Dendritic cell treated with granulocyte-macrophage colony-stimulating factor and Interleukin-4, amounts not matched to agents 40 ng/mL and 50 ng/mL, for 4 days (primary cell): ENCODE measurements at regions of chr13 and their contacts with region 1.

Region 1: GRCh38 chr13:113153810-113154748 is 4.4 kb upstream of the PROZ start:
- H3K4me3 Mint-ChIP-seq: peak overlapping the region; percentile 75
- H3K27ac Mint-ChIP-seq: peak overlapping the region; percentile 84
- H3K4me1 Mint-ChIP-seq: peaks cover 23% of the 10 kb centered on the region
- H3K27me3 Mint-ChIP-seq: peaks cover 29% of the 10 kb centered on the region

Region 2: DNA sequence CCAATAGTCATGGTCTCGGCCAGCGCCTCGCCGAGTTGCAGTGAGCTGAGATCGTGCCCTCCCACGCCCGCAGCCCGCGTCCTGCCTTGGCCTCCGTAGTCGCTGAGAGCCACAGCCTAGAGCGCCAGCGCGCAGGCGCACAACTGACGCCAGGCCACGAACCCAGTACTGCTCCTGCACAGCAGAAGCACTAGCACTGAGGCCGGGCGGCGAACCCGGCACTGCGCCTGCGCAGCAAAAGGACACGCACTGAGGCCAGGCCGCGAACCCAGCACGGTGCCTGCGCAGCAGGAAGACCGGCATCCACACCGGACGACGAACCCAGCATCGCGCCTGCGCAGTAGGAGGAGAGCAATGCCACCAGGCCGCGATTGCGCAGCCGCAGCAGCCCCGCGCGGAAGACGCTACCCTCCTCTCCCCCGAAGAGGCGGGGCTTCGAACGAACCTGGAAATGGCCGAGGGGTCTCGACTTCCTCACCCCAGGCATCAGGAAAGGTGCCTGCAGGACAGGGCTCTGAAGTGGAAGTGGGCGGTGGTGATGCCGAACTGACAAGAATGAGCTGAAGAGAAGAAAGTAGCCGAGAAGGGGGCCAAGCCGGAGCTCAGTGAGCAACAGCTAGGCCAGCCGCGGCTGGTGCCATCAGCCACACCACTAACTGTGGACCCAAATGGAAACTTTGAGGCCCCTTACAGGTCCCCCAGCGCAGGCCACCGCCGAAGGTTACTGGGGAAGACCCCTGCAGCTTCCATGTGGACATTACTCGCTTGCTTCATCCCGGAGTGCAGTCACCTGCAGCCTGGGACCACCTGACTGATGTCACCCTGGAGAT is 23.9 kb before region 1 on chr13:
- intact Hi-C with region 1: no loop called
- H3K4me3 Mint-ChIP-seq: peak overlapping the region; percentile 59
- H3K27ac Mint-ChIP-seq: no peak overlapping the region
- H3K4me1 Mint-ChIP-seq: peaks cover 5% of the 10 kb centered on the region
- H3K27me3 Mint-ChIP-seq: peaks cover 45% of the 10 kb centered on the region

Region 3: DNA sequence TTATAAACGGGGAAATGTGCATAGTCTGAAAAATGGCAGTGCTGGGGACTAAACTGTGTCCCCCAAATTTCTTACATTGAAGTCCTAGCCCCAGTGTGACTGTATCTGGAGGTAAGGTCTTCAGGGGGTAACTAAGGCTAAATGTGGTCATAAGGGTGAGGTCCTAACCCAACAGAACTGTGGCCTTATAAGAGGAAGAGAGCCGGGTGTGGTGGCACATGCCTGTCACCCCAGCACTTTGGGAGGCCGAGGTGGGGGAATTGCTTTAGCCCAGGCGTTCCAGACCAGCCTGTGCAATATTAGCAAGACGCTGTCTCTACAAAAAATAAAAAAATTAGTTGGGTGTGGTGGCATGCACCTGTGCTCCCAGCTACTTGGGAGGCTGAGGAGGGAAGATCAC is 22.2 kb after region 1 on chr13:
- intact Hi-C with region 1: loop called (anchors 1 kb)
- H3K4me3 Mint-ChIP-seq: peak overlapping the region; percentile 6
- H3K27ac Mint-ChIP-seq: peak overlapping the region; percentile 93
- H3K4me1 Mint-ChIP-seq: peaks cover 30% of the 10 kb centered on the region
- H3K27me3 Mint-ChIP-seq: no peaks in the 10 kb centered on the region

Region 4: DNA sequence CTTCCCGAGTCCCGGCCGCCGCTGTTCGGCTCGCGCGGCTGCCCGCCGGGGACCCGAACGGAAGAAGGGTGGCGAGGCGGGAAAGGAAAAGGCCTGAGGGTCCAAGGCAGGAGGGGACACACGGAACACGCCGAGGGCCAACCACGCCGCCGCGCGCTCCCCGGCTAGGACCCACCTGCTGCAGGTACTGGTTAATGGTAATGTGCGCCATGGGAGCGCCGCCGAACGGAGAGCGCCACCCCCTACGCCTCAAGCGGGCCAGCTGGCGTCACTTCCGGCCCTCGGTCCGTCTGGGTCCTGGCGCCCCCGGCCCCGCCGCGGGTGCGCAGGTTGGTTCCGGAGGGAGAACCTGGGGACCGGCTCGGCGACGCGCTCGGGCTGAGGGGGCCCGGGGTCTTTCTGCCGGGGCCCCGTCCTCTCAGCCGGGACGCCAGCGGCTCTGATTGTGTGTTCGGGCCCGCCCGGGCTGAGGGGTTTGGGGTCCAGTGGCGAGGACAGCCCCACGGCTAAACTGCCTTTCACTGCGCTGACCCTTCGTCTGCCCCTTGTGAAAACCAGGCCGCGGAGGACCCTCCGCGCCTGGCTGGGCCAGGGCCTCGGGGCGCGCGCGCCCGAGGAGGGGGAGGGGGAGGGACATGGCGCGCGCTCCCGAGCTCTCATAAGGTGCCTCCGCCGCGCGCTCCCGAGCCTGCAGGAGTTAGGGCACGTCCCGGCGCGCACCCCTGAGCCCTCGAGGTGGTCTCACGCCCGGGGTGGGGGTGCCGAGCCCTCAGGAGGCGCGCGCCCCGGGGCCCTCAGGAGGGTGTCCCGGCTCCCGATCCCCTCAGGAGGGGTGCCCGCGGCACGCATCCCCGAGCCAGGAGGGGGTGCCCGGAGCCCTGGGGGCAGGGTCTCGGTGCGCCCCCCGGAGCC is 54.6 kb after region 1 on chr13 and contains the start of gene PCID2:
- intact Hi-C with region 1: loop called (anchors 2 kb)
- H3K4me3 Mint-ChIP-seq: peak within 1 kb of the TSS; percentile 81
- H3K27ac Mint-ChIP-seq: peak within 1 kb of the TSS; percentile 82
- H3K4me1 Mint-ChIP-seq: peaks cover 66% of the 10 kb centered on the region
- H3K27me3 Mint-ChIP-seq: no peaks in the 10 kb centered on the region

Region 5: GRCh38 chr13:113296842-113297369 is 142.8 kb after region 1 on chr13 and contains the start of gene LAMP1:
- intact Hi-C with region 1: loop called (anchors 10 kb)
- H3K4me3 Mint-ChIP-seq: peak within 1 kb of the TSS; percentile 88
- H3K27ac Mint-ChIP-seq: peak within 1 kb of the TSS; percentile 74
- H3K4me1 Mint-ChIP-seq: peaks cover 55% of the 10 kb centered on the region
- H3K27me3 Mint-ChIP-seq: peaks cover 49% of the 10 kb centered on the region

Region 6: DNA sequence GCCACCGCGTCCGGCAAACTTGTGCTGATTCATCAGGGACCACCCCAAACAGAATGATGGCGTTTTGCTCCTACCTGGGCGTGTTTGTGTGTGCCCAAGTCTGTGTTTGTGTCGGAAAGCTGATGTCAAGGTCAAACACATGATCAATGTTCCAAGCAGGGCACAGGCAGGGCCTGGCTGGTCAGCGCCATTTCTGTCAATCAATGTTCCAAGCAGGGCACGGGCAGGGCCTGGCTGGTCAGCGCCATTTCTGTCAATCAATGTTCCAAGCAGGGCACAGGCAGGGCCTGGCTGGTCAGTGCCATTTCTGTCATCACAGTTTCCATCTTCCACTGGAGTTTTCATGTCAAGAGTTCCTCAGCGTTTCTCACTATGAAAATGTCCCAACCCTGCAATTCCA is 224.7 kb after region 1 on chr13:
- intact Hi-C with region 1: no loop called
- H3K4me3 Mint-ChIP-seq: no peak overlapping the region
- H3K27ac Mint-ChIP-seq: no peak overlapping the region
- H3K4me1 Mint-ChIP-seq: no peaks in the 10 kb centered on the region
- H3K27me3 Mint-ChIP-seq: peaks cover 37% of the 10 kb centered on the region

Region 7: GRCh38 chr13:113490496-113491417 is 336.7 kb after region 1 on chr13 and contains the start of gene DCUN1D2:
- intact Hi-C with region 1: loop called (anchors 5 kb)
- H3K4me3 Mint-ChIP-seq: peak within 1 kb of the TSS; percentile 94
- H3K27ac Mint-ChIP-seq: peak within 1 kb of the TSS; percentile 91
- H3K4me1 Mint-ChIP-seq: peaks cover 67% of the 10 kb centered on the region
- H3K27me3 Mint-ChIP-seq: no peaks in the 10 kb centered on the region